ENCODE measurements at regions of chr13 and their contacts with region 1.

Region 1: DNA sequence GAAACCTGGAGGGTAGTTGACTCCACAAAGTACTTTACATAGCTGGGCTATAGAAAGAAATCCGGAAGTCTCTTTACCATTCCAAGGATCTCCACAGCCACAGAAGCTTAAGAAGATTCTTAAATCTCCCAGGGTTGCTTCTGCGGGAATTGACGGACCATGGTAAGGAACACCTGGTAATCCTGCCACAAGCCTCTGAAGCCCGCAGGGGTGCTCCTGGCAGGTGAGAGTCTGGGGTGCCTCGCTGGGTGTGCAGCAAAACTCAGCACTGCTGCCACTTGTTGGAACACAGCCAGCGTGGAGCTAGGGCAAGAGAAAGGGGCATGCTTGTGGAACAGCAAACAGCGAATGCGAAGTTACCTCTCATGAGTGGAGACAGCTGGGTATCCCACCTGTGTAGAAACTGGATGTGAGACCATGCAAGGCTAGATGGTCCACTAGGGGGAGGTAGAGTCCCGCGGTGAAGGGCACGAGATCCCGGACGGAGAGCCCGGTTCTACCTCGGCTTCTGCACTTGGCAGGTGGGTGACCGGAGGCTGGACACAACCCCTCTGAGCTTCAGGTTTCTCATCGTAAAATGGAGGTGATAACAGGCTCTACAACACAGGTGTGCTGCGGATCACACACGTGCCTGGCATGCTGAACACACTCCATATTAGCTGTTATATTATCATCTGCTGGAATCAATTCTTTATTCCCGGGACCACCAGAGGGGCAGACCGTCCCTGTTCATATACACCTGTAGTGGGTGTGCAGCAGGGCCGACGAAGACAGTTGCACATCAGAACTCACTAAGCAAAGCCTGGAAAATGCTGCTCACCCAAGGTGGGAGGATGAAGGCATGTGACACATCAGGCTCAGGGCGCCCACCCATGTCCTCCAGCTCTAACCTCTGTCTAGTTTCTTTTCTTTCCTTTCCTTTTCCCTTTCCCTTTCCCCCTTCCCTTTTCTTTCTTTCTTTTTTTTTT is 24.1 kb upstream of the UBAC2 start:
- DNase-seq: peak; percentile 77
- H3K4me3 Mint-ChIP-seq: no peak overlapping the region
- H3K27ac Mint-ChIP-seq: no peak overlapping the region
- H3K4me1 Mint-ChIP-seq: peaks cover 6% of the 10 kb centered on the region
- H3K27me3 Mint-ChIP-seq: no peaks in the 10 kb centered on the region
- CTCF ChIP-seq: peak; percentile 91

Region 2: DNA sequence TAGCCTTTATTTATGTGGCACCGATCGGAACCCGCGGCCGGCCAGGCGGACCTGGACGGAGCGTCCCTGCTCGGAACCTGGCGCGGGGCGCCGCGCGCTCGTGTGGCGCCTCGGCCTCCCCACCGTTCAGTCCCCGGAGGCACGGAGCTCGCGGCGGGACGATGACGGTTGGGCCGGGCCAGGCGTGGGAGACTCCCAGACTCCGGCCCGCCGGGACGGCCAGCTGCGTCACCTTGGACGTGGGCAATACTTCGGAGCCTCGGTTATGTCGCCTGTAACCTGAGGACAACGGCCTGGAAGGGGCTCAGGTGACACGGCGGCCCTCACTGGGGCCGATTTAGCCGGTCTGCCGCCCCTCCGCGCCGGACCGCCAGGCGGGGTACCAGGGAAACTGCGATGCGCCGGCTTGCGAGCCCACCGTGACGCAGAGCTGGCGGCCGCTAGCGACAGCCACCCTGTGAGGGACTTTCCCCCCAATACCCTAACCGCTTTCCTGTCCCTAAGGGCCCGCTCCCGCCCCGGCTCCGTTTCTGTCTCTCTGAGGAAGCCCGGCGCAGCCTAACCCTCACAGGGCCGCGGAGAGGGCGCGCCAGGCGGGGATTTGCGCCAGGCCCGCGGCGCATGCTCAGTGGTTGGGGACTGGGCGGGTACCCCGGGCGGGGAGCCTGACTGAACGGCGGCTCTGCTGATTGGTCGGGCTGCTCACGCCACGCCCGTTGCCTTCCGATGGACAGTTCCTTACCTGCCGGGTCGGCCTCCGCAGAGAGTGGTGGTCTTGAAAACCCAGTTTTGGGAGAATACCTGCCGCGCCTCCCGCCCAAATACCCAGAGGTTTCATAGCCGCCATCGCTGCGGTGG is 89.3 kb before region 1 on chr13:
- CTCF ChIA-PET with region 1: interaction called, 11 read pairs
- POLR2A ChIA-PET with region 1: interaction called, 5 read pairs
- intact Hi-C with region 1: loop called (anchors 2 kb)
- DNase-seq: peak; percentile 89
- H3K4me3 Mint-ChIP-seq: peak overlapping the region; percentile 98
- H3K27ac Mint-ChIP-seq: peak overlapping the region; percentile 85
- H3K4me1 Mint-ChIP-seq: peaks cover 21% of the 10 kb centered on the region
- H3K27me3 Mint-ChIP-seq: no peaks in the 10 kb centered on the region
- CTCF ChIP-seq: no peak

Region 3: DNA sequence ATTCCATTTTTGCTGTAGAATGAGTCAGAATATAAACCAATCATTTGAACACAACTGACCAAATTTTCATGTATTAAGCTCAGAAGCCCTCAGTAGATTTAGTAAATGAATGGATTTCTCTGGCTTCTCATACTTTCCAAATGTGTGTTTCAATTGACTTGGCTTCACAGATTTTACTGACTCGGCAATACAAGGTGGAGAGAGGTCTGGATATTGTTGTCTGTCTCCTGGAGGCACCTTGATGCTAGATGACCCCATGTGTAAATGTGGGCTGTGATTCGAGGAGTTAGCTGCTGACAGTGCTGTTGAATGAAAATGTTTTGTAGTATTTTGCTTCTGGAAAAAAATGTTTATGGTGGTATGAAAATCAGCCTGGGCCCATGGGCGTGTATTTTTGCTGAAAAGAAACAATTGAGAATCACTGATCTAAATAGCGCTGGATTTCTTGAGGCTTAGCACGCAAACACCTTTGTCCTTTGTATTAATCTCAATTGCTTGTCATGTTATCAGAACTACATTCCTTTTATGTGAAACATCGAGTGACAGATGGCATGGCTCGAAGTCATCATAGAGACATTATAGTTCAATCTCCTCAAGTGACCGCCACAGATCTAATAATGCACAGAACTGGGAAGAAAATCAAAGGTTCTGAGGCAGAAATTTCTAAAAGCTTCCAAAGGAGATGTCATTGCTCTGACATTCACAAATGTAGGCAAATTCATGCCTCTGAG is 17.1 kb before region 1 on chr13:
- CTCF ChIA-PET with region 1: interaction called, 14 read pairs
- POLR2A ChIA-PET with region 1: no interaction called
- intact Hi-C with region 1: no loop called
- DNase-seq: no peak
- H3K4me3 Mint-ChIP-seq: no peak overlapping the region
- H3K27ac Mint-ChIP-seq: no peak overlapping the region
- H3K4me1 Mint-ChIP-seq: no peaks in the 10 kb centered on the region
- H3K27me3 Mint-ChIP-seq: no peaks in the 10 kb centered on the region
- CTCF ChIP-seq: no peak

Region 4: GRCh38 chr13:99191879-99192399 is 15.3 kb after region 1 on chr13:
- CTCF ChIA-PET with region 1: interaction called, 87 read pairs
- POLR2A ChIA-PET with region 1: no interaction called
- intact Hi-C with region 1: no loop called
- DNase-seq: no peak
- H3K4me3 Mint-ChIP-seq: no peak overlapping the region
- H3K27ac Mint-ChIP-seq: no peak overlapping the region
- H3K4me1 Mint-ChIP-seq: peaks cover 11% of the 10 kb centered on the region
- H3K27me3 Mint-ChIP-seq: no peaks in the 10 kb centered on the region
- CTCF ChIP-seq: no peak

Region 5: DNA sequence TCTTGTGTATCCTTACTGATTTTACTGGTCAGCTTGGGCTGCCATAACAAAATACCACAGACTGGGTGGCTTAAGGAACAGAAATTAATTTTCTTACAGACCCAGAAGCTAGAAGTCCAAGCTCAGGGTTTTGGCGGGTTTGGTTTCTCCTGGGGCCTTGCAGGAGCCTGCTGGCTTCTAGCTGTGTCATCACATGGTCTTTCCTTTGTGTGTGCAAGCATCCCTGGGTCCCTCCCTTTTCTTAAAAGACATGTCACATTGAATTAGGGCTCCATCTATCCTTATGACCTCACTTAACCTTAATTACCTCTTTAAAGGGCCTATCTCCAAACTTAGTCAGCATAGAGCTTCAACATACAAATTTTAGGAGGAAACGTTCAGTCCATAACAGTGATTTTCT is 47.4 kb after region 1 on chr13:
- CTCF ChIA-PET with region 1: no interaction called
- POLR2A ChIA-PET with region 1: no interaction called
- intact Hi-C with region 1: no loop called
- DNase-seq: no peak
- H3K4me3 Mint-ChIP-seq: no peak overlapping the region
- H3K27ac Mint-ChIP-seq: no peak overlapping the region
- H3K4me1 Mint-ChIP-seq: peaks cover 31% of the 10 kb centered on the region
- H3K27me3 Mint-ChIP-seq: no peaks in the 10 kb centered on the region
- CTCF ChIP-seq: no peak

Region 6: DNA sequence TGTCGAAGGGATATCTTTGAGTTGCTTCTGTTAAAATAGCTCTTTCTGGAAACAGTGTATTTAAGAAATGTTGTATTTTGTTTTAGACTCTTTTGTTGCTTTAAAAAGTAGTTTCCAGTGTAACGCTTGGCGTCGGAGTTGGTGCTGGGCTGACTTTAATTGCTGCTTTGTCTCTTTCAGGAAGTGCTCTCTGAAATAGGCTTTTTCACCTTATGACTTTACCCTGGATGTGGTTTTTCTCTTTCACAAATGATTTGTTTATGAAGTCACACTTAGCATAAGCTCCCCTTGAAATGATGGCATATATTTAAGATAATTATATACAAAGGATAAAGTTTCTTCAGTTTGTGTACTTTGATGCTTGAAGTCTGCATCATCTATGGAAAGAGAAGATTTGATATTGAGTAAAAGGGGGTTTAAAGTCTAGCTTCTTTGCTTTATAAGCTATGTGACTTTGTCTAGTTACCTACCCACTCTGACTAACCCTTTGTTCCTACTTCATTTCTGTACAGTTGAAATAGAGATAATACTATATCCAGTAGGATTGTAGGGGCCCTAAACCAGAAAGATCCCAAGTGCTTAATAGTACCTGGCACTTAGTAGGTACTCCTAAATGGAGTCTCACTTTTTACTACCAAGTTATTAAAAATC is 81.7 kb after region 1 on chr13 and contains the start of gene GPR18:
- CTCF ChIA-PET with region 1: interaction called, 173 read pairs
- POLR2A ChIA-PET with region 1: no interaction called
- intact Hi-C with region 1: no loop called
- DNase-seq: no peak
- H3K4me3 Mint-ChIP-seq: no peak within 1 kb of the TSS
- H3K27ac Mint-ChIP-seq: no peak within 1 kb of the TSS
- H3K4me1 Mint-ChIP-seq: peaks cover 5% of the 10 kb centered on the region
- H3K27me3 Mint-ChIP-seq: no peaks in the 10 kb centered on the region
- CTCF ChIP-seq: no peak
- total RNA-seq, gene GPR18: not detected in 2 replicates

Region 7: GRCh38 chr13:99275093-99275469 is 98.5 kb after region 1 on chr13:
- CTCF ChIA-PET with region 1: interaction called, 173 read pairs
- POLR2A ChIA-PET with region 1: interaction called, 5 read pairs
- intact Hi-C with region 1: no loop called
- DNase-seq: peak; percentile 14
- H3K4me3 Mint-ChIP-seq: no peak overlapping the region
- H3K27ac Mint-ChIP-seq: no peak overlapping the region
- H3K4me1 Mint-ChIP-seq: peaks cover 14% of the 10 kb centered on the region
- H3K27me3 Mint-ChIP-seq: no peaks in the 10 kb centered on the region
- CTCF ChIP-seq: no peak

Region 8: GRCh38 chr13:99526549-99526948 is 350.0 kb after region 1 on chr13:
- CTCF ChIA-PET with region 1: no interaction called
- POLR2A ChIA-PET with region 1: no interaction called
- intact Hi-C with region 1: no loop called
- DNase-seq: no peak
- H3K4me3 Mint-ChIP-seq: no peak overlapping the region
- H3K27ac Mint-ChIP-seq: no peak overlapping the region
- H3K4me1 Mint-ChIP-seq: no peaks in the 10 kb centered on the region
- H3K27me3 Mint-ChIP-seq: no peaks in the 10 kb centered on the region
- CTCF ChIP-seq: no peak